Thyroid gland (tissue), 4 donors: ENCODE measurements at regions of chr11 and their contacts with region 1.

Region 1: DNA sequence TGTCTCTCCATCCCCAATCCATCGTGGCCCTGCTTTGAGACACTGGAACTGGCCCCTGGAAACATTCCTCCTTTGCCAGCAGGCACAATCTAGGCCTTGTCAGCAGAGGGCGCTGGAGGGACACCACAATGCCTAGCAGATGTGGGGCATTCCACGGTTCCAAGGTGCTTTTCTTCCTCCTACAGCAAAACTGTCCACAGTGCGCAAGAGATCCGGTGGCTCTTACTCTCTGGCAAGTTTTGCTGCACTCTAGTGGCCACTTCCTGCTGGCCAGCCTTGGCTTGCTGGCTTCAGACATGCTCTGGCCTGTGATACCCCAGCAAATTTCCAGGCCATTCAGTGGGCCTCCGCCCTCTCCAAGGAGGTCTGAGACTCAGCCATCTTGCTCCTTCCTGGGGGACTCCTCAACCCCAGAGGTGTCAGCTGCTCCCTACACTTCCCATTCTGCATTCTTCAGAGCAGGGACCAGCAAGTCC is 17.1 kb upstream of the RBM4B start:
- DNase-seq: peak; percentile 89 to 92
- H3K4me3 ChIP-seq: no peak overlapping the region
- H3K27ac ChIP-seq: no peak overlapping the region
- H3K4me1 ChIP-seq: no peaks in the 10 kb centered on the region
- H3K27me3 ChIP-seq: no peaks in the 10 kb centered on the region
- CTCF ChIP-seq: peak; percentile 88 to 97 (median 94)
- POLR2A ChIP-seq: no peak

Region 2: DNA sequence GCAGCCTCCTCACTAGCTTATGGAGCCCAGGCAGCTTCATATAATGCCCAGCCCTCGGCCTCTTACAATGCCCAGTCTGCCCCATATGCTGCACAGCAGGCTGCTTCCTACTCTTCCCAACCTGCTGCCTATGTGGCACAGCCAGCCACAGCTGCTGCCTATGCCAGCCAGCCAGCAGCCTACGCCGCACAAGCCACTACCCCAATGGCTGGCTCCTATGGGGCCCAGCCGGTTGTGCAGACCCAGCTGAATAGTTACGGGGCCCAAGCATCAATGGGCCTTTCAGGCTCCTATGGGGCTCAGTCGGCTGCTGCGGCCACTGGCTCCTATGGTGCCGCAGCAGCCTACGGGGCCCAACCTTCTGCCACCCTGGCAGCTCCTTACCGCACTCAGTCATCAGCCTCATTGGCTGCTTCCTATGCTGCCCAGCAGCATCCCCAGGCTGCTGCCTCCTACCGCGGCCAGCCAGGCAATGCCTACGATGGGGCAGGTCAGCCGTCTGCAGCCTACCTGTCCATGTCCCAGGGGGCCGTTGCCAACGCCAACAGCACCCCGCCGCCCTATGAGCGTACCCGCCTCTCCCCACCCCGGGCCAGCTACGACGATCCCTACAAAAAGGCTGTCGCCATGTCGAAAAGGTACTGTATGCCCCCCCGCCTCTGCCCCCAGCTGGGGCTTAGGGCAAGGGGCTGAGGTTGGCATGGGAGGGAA is 69.6 kb before region 1 on chr11:
- intact Hi-C with region 1: no loop called
- DNase-seq: no peak
- H3K4me3 ChIP-seq: no peak overlapping the region
- H3K27ac ChIP-seq: no peak overlapping the region
- H3K4me1 ChIP-seq: peaks cover 26 to 34% of the 10 kb centered on the region in 2 donors
- H3K27me3 ChIP-seq: no peaks in the 10 kb centered on the region
- CTCF ChIP-seq: no peak
- POLR2A ChIP-seq: no peak

Region 3: DNA sequence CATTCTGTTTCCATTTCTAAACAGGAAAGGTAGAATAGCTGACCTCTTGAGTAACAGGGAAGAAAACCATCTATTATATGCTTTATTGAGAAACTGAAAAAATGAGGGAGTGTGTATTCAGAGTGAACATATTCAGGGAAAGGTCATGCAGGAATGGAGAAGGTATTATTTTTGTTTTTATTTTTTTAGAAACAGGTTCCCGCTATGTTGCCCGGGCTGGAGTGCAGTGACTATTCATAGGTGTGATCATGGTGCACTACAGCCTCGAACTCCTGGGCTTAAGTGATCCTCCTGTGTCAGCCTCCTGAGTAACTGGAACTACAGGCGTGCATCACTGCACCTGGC is 139.7 kb after region 1 on chr11:
- intact Hi-C with region 1: loop called (anchors 5 kb)
- DNase-seq: no peak
- H3K4me3 ChIP-seq: no peak overlapping the region
- H3K27ac ChIP-seq: no peak overlapping the region
- H3K4me1 ChIP-seq: no peaks in the 10 kb centered on the region
- H3K27me3 ChIP-seq: no peaks in the 10 kb centered on the region
- CTCF ChIP-seq: no peak
- POLR2A ChIP-seq: no peak